ENCODE measurements at regions of chr17 and their contacts with region 1.

Region 1: GRCh38 chr17:65556014-65556909 is 5.2 kb downstream of the AXIN2 start:
- DNase-seq: peak; percentile 89
- ATAC-seq: peak; percentile 65 to 70
- H3K4me3 ChIP-seq: no peak overlapping the region
- H3K27ac ChIP-seq: no peak overlapping the region
- H3K4me1 ChIP-seq: peaks cover 8% of the 10 kb centered on the region
- H3K27me3 ChIP-seq: peaks cover 3% of the 10 kb centered on the region
- CTCF ChIP-seq: peak; percentile 86

Region 2: GRCh38 chr17:65294179-65294720 is 262.0 kb before region 1 on chr17:
- intact Hi-C with region 1: loop called (anchors 10 kb)
- DNase-seq: peak; percentile 57
- ATAC-seq: peak; percentile 90 to 93
- H3K4me3 ChIP-seq: no peak overlapping the region
- H3K27ac ChIP-seq: no peak overlapping the region
- H3K4me1 ChIP-seq: no peaks in the 10 kb centered on the region
- H3K27me3 ChIP-seq: no peaks in the 10 kb centered on the region
- CTCF ChIP-seq: peak; percentile 85

Measured in lower lobe of right lung (tissue), 2 donors.